HEK293T (cell line): ENCODE measurements at regions of chr6 and their contacts with region 1.

Region 1: GRCh38 chr6:36302227-36302976 is 32.5 kb downstream of the PNPLA1 start:
- DNase-seq: peak; percentile 83

Region 2: DNA sequence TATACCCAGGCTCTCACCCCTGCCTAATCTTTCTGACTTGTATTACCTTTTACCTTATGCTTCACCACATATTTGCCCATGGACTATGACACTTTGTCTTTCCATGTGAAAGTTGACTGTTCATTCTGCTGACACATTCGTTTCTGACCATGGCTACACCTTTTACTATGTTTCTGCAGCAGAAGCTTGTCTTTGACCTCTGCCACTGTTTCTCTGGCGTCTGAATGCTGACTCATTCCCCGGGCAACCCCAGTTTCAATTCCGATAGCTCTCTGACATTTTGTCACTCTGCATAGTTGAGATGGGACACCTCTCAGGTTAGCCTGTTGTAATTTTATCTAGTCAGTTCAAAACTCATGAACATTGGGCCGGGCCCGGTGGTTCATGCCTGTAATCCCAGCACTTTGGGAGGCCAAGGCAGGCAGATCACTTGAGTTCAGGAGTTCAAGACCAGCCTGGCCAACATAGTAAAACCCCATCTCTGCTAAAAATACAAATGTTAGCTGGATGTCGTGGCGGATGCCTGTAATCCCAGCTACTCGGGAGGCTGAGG is 328.7 kb before region 1 on chr6:
- CTCF ChIA-PET with region 1: no interaction called
- POLR2A ChIA-PET with region 1: no interaction called
- DNase-seq: no peak

Region 3: GRCh38 chr6:36360241-36361054 is 58.0 kb after region 1 on chr6:
- CTCF ChIA-PET with region 1: interaction called, 12 read pairs
- POLR2A ChIA-PET with region 1: no interaction called
- DNase-seq: peak; percentile 87

Region 4: DNA sequence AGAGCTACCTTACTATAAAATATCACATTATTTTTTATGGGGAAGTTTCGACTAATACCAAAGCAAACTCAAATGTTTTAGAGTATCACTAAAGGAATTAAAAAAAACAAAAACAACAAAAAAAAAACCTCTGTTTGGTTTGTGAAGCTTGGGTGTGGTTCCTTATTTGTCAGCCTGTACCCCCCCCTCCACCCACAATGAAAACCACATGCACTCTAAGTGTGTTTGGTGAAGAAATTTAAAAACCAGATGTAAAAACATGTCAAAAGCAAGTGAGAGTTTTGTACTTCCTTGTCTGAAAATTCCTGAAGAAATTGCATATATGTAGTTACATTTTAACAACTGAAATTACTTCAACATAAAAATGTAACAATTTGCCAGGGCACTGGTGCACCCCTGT is 241.8 kb after region 1 on chr6:
- CTCF ChIA-PET with region 1: no interaction called
- POLR2A ChIA-PET with region 1: no interaction called
- DNase-seq: no peak